ENCODE measurements at regions of chr2 and their contacts with region 1.

Region 1: GRCh38 chr2:46461011-46461674 is 18.2 kb upstream of the TMEM247 start:
- DNase-seq: peak; percentile 72
- ATAC-seq: peak; percentile 79
- H3K4me3 ChIP-seq: no peak overlapping the region
- H3K27ac ChIP-seq: no peak overlapping the region
- H3K4me1 ChIP-seq: peaks cover 4% of the 10 kb centered on the region; the same call in 1 of the 2 replicates
- H3K27me3 ChIP-seq: no peaks in the 10 kb centered on the region
- CTCF ChIP-seq: peak; percentile 98

Region 2: GRCh38 chr2:45993476-45993991 is 467.6 kb before region 1 on chr2:
- CTCF ChIA-PET with region 1: interaction called, 4 read pairs
- POLR2A ChIA-PET with region 1: no interaction called
- in situ Hi-C with region 1: no loop called
- intact Hi-C with region 1: loop called (anchors 1 kb)
- DNase-seq: peak; percentile 55
- ATAC-seq: peak; percentile 77; the same call in 1 of the 2 replicates
- H3K4me3 ChIP-seq: no peak overlapping the region
- H3K27ac ChIP-seq: no peak overlapping the region
- H3K4me1 ChIP-seq: peaks cover 13% of the 10 kb centered on the region
- H3K27me3 ChIP-seq: no peaks in the 10 kb centered on the region
- CTCF ChIP-seq: peak; percentile 86

Region 3: GRCh38 chr2:46187112-46187618 is 274.0 kb before region 1 on chr2:
- CTCF ChIA-PET with region 1: no interaction called
- POLR2A ChIA-PET with region 1: no interaction called
- in situ Hi-C with region 1: no loop called
- intact Hi-C with region 1: no loop called
- DNase-seq: no peak
- ATAC-seq: peak; percentile 42; the same call in 1 of the 2 replicates
- H3K4me3 ChIP-seq: no peak overlapping the region
- H3K27ac ChIP-seq: no peak overlapping the region
- H3K4me1 ChIP-seq: 0 out of 2 replicates have a peak, but pooled peaks cover 2% of the 10 kb centered on the region
- H3K27me3 ChIP-seq: no peaks in the 10 kb centered on the region
- CTCF ChIP-seq: no peak

Region 4: GRCh38 chr2:46306330-46306751 is 154.8 kb before region 1 on chr2:
- CTCF ChIA-PET with region 1: interaction called, 6 read pairs
- POLR2A ChIA-PET with region 1: no interaction called
- in situ Hi-C with region 1: no loop called
- intact Hi-C with region 1: loop called (anchors 2 kb)
- DNase-seq: peak; percentile 93
- ATAC-seq: peak; percentile 65
- H3K4me3 ChIP-seq: peak overlapping the region in 1 of 2 experiments; percentile 26; a peak in 2 of 4 replicates
- H3K27ac ChIP-seq: peak overlapping the region; percentile 88
- H3K4me1 ChIP-seq: peaks cover 93% of the 10 kb centered on the region
- H3K27me3 ChIP-seq: no peaks in the 10 kb centered on the region
- CTCF ChIP-seq: no peak

Region 5: DNA sequence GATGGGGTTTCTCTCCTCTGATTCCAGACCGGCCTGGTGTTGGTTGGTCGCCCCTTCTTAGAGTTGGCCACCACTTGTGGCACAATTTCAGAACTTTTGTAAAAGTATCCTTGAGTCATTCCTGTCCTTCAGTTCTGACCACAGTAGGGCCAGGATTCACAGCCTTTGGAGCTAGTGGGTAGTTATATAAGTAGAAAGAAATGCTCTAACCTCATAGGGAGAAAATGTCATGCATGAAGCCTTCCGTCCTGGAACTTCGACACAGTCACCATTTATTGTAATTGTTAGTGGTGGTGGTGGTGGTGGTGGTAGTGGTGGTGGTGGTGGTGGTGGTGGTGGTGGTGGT is 98.5 kb before region 1 on chr2:
- CTCF ChIA-PET with region 1: no interaction called
- POLR2A ChIA-PET with region 1: no interaction called
- in situ Hi-C with region 1: no loop called
- intact Hi-C with region 1: no loop called
- DNase-seq: no peak
- ATAC-seq: no peak
- H3K4me3 ChIP-seq: no peak overlapping the region
- H3K27ac ChIP-seq: no peak overlapping the region
- H3K4me1 ChIP-seq: 0 out of 2 replicates have a peak, but pooled peaks cover 3% of the 10 kb centered on the region
- H3K27me3 ChIP-seq: no peaks in the 10 kb centered on the region
- CTCF ChIP-seq: no peak

Region 6: DNA sequence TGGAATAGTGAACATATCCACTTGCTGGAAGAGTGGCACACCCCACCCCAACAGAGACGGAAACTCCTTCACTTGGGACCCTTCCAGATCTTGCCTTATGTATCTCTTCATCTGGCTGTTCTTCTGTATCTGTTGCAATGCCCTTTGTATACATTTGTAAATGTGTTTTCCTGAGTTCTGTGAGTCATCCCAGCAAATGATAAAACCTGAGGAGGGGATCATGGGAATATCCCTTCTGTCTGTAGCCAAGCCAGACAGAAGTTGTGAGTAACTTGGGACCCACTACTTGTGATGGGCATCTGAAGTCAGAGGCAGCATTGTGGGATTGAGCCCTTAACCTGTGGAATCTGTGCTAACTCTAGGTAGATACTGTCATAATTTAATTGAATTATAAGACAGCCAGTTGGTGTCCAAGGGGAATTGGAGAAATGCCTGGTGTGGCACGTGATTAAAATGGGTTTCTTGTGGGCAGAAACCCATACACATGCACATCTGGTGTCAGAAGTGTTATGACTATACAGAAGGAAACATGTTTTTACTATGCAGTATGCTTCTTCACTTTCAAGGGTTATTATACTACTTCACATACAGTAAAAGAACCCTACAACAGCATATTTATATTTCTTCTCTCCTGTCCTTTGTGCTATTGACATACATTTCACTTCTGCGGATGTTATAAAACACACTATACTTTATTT is 14.1 kb before region 1 on chr2:
- CTCF ChIA-PET with region 1: no interaction called
- POLR2A ChIA-PET with region 1: no interaction called
- in situ Hi-C with region 1: no loop called
- intact Hi-C with region 1: no loop called
- DNase-seq: no peak
- ATAC-seq: no peak
- H3K4me3 ChIP-seq: no peak overlapping the region
- H3K27ac ChIP-seq: no peak overlapping the region
- H3K4me1 ChIP-seq: no peaks in the 10 kb centered on the region
- H3K27me3 ChIP-seq: no peaks in the 10 kb centered on the region
- CTCF ChIP-seq: no peak

Region 7: DNA sequence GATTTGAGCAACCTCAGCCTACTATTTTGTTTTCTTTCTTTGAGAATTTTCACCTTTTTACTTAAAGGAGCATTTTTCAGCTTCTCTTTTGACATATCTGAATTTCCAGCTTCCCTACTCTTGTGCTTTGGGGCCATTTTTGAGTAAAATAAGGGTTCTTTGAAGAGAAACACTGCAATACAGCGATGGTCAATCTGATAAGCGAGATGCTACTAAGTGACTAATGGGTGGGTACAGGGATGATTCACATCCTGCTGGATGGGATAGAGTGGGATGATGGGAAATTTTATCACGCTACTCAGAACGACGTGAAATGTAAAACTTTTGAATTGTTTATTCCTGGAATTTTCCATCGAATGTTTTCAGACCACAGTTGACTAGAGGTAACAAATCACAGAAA is 229.7 kb after region 1 on chr2:
- CTCF ChIA-PET with region 1: no interaction called
- POLR2A ChIA-PET with region 1: interaction called, 10 read pairs
- in situ Hi-C with region 1: no loop called
- intact Hi-C with region 1: no loop called
- DNase-seq: no peak
- ATAC-seq: no peak
- H3K4me3 ChIP-seq: no peak overlapping the region
- H3K27ac ChIP-seq: no peak overlapping the region
- H3K4me1 ChIP-seq: no peaks in the 10 kb centered on the region
- H3K27me3 ChIP-seq: no peaks in the 10 kb centered on the region
- CTCF ChIP-seq: no peak

Region 8: DNA sequence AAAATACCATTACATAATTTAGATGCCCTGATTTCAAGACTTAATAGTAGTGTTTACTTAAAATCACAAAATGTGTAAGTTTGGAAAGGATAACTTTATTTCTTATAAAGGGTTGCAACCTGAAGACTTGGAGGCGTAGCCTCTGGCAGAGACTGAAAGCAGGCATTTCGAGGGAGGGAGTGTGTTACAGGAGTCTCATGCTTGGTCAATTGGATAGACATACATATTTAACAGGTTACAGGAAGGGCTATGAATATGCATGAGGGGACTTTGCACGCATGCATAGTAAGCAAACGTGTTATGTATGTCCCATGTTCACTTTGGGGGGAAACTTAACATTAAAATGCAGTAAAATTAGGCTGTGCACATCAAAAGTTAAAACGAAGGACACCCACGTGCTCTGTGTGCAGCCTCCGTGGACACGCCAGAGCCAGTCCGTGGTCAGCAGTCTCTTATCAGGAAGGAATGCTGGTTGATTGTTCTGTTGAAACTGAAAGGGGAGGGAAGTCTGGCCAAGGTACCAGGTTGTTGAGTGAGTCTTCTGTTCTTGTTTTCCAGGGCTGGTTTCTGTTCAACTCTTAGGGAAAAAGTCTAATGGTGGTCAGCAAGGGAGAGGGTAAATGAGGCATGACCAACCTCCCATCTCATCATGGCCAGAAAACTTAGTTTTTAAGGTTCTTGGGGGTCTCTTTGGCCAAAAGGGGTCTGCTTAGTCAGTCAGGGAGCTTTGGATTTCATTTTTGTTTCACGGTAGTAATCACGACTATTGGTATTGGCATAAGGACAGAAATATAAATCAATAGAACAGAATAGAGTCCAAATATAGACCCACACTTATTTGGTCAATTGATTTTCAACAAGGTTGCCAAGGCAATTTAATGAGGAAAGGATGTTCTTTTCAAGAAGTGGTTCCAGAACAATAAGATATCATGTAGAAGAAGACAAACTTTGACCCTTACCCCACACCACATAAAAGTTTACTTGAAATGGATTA is 332.6 kb after region 1 on chr2:
- CTCF ChIA-PET with region 1: no interaction called
- POLR2A ChIA-PET with region 1: no interaction called
- in situ Hi-C with region 1: no loop called
- intact Hi-C with region 1: no loop called
- DNase-seq: no peak
- ATAC-seq: no peak
- H3K4me3 ChIP-seq: no peak overlapping the region
- H3K27ac ChIP-seq: no peak overlapping the region
- H3K4me1 ChIP-seq: no peaks in the 10 kb centered on the region
- H3K27me3 ChIP-seq: no peaks in the 10 kb centered on the region
- CTCF ChIP-seq: no peak